RWPE1 (cell line): ENCODE measurements at regions of chr6 and their contacts with region 1.

Region 1: GRCh38 chr6:16836144-16836981 is 75.1 kb upstream of the ATXN1 start:
- DNase-seq: no peak
- H3K27ac ChIP-seq: no peak overlapping the region
- CTCF ChIP-seq: no peak

Region 2: GRCh38 chr6:16741112-16742016 is 95.0 kb before region 1 on chr6:
- CTCF ChIA-PET with region 1: no interaction called
- POLR2A ChIA-PET with region 1: no interaction called
- DNase-seq: peak; percentile 55
- H3K27ac ChIP-seq: no peak overlapping the region
- CTCF ChIP-seq: no peak

Region 3: DNA sequence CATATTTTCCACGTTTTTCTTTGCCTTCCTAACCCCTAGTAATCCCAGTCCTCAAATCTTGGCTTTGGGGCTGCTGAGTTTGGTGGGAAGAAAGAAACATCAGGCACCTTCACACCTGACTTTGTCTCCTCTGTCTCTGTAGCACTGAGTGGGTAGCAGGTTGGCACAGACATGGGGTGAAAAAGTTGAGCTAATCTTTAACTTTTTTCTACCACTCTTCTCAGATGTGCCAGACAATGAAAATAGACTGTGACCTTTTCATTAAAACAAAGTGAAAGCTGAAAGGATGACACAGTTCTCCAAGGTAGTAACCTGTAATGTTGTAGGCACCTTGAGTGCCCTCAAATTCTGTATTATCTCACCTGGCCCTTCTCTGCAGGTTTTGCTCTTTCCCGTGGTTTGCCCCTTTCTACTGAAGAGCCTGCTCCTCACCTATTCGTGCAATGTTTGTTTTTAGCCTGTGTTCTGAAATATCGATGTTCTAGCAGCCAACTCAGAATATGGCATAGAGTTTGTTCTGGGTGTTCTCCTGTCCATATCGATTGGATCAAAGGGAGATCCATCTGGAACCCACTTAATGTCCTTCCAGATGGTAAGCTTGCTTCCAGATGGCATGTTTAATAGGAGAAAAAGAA is 17.3 kb before region 1 on chr6:
- CTCF ChIA-PET with region 1: no interaction called
- POLR2A ChIA-PET with region 1: interaction called, 13 read pairs
- DNase-seq: no peak
- H3K27ac ChIP-seq: no peak overlapping the region
- CTCF ChIP-seq: no peak

Region 4: GRCh38 chr6:16901782-16902181 is 65.4 kb after region 1 on chr6:
- CTCF ChIA-PET with region 1: no interaction called
- POLR2A ChIA-PET with region 1: no interaction called
- DNase-seq: peak; percentile 8
- H3K27ac ChIP-seq: no peak overlapping the region
- CTCF ChIP-seq: no peak